GM12878 (cell line): ENCODE measurements at regions of chr4 and their contacts with region 1.

Region 1: DNA sequence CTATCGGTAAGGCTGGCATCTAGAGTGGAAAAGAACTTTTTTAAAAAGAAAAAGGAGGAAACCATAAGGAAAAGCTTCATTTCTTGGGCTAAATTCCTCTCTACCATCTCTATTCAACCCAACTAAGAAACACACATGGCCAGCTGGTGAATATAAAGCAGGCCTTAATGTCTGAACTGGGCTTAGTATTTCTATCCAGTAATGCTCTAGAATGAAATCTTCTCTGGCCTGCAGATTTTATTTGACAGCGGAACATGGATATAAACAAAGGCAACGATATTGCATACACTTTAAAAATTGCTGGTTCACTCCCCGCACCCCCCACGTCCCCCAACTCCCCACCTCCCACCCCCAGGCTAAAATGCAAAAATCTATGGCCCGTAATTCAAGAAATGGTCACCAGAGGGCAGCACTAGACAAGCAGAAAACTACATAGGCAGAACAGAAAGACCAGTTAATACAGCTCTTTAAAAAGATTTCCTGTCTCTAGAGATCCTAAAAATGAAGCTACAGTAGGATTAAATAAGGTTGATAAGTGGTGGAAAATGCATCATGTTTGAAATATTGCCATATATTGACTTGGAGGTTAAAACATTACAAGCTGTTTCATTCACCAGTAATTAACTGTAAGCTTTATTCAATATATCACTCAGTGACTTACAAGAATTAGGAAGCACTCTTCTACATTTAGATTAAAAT is 155.2 kb upstream of the GALNT7 start:
- DNase-seq: peak; percentile 9
- ATAC-seq: peak; percentile 84
- H3K4me3 ChIP-seq: no peak overlapping the region
- H3K27ac ChIP-seq: no peak overlapping the region
- H3K4me1 ChIP-seq: no peaks in the 10 kb centered on the region
- H3K27me3 ChIP-seq: no peaks in the 10 kb centered on the region
- CTCF ChIP-seq: peak; percentile 42 to 65 (median 64); a peak in 5 of 6 replicates
- EP300 ChIP-seq: no peak
- POLR2A ChIP-seq: no peak
- RAD21 ChIP-seq: peak; percentile 94

Region 2: DNA sequence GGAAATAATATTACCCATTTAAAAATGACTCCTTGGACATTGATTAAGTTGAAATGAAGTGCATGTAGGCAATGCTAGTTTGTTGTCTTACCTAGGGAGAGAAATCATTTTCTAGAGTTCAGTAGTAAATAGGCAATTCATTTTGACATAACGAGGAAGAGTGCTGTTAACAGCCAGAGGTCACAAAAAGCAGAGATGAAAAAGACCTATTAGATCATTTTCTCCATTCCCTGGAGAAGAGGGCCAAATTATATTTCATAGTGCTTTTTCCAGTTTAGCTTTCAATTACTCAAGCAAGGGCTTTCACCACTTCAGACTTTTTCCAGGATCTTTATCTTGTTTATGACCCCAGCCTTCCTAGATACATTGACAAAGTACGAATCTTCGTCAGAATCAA is 219.1 kb before region 1 on chr4:
- CTCF ChIA-PET with region 1: no interaction called
- POLR2A ChIA-PET with region 1: no interaction called
- RAD21 ChIA-PET with region 1: no interaction called
- SMC1A ChIA-PET with region 1: no interaction called
- in situ Hi-C with region 1: no loop called
- intact Hi-C with region 1: no loop called
- DNase-seq: no peak
- ATAC-seq: no peak
- H3K4me3 ChIP-seq: no peak overlapping the region
- H3K27ac ChIP-seq: no peak overlapping the region
- H3K4me1 ChIP-seq: no peaks in the 10 kb centered on the region
- H3K27me3 ChIP-seq: no peaks in the 10 kb centered on the region
- CTCF ChIP-seq: no peak
- EP300 ChIP-seq: no peak
- POLR2A ChIP-seq: no peak
- RAD21 ChIP-seq: no peak

Region 3: GRCh38 chr4:172953896-172954568 is 59.3 kb before region 1 on chr4:
- CTCF ChIA-PET with region 1: no interaction called
- POLR2A ChIA-PET with region 1: no interaction called
- RAD21 ChIA-PET with region 1: no interaction called
- SMC1A ChIA-PET with region 1: no interaction called
- in situ Hi-C with region 1: no loop called
- intact Hi-C with region 1: no loop called
- DNase-seq: no peak
- ATAC-seq: no peak
- H3K4me3 ChIP-seq: no peak overlapping the region
- H3K27ac ChIP-seq: no peak overlapping the region
- H3K4me1 ChIP-seq: no peaks in the 10 kb centered on the region
- H3K27me3 ChIP-seq: no peaks in the 10 kb centered on the region
- CTCF ChIP-seq: no peak
- EP300 ChIP-seq: no peak
- POLR2A ChIP-seq: no peak
- RAD21 ChIP-seq: no peak

Region 4: DNA sequence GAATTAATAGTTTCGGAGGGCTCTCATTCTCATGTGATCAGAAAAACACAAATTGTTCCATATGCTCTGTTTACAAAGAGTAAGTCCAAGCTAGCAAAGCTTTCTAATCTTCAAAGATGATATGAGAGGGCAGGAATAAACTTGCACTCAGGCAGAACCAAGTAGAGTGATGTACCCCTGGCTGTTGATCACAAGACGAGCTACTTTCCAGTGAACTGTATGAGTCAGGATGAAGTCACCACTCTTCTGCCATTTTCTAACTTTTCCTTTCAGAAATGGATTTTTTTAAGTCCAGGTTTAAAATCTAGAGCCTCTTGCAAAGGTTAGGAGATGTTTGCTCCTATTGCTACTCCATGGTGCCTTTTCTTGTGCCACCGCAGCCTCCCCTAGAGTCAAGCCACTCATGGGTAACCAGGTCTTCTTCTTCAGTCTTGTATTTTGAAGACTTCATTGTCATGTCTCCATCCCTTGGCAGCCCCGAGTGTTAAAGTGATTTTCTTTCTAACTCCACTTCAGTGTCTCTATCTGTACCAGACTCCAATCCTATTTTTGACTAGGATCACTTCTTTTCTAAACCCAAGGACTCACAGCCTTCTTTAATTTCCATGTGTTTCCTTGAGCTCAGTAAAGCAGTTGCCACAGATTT is 16.7 kb before region 1 on chr4:
- CTCF ChIA-PET with region 1: interaction called, 10 read pairs
- POLR2A ChIA-PET with region 1: no interaction called
- RAD21 ChIA-PET with region 1: no interaction called
- SMC1A ChIA-PET with region 1: interaction called, 8 read pairs
- in situ Hi-C with region 1: no loop called
- intact Hi-C with region 1: no loop called
- DNase-seq: no peak
- ATAC-seq: peak; percentile 52
- H3K4me3 ChIP-seq: no peak overlapping the region
- H3K27ac ChIP-seq: no peak overlapping the region
- H3K4me1 ChIP-seq: no peaks in the 10 kb centered on the region
- H3K27me3 ChIP-seq: no peaks in the 10 kb centered on the region; a peak in 1 of 4 replicates
- CTCF ChIP-seq: no peak
- EP300 ChIP-seq: no peak
- POLR2A ChIP-seq: no peak
- RAD21 ChIP-seq: no peak

Region 5: DNA sequence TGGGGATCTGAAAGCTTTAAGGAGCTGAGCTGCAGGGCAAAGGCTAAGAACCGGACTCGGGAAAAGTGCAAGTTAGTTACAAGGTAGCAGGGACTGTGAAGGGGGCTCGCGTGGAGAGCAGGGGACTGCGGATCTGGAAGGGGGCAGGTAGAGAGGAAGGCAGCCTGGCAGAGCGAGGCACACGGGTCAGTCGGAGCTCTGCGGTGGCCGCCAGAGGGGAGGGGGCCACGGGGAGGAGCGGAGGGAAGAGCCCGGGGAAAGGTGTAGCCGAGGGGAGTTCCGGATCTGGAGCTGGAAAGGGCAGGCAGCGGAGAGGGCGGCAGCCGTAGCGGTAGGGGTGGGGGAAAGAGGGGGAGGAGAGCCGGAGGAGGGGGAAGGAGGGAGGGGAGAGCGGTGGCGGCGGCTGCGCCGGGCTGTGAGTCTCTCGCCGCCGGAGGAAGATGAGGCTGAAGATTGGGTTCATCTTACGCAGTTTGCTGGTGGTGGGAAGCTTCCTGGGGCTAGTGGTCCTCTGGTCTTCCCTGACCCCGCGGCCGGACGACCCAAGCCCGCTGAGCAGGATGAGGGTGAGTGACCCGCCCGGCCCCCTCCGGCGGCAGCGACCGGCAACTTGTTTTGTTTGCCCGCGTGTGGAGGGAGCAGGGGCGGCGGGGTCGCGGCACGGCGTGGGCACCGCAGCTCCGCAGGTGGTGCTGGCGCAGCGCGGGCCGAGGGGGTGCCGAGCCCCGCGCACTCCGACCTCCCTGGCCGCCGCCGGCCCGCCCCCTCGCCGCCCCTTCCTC is 155.2 kb after region 1 on chr4 and contains the start of gene GALNT7:
- CTCF ChIA-PET with region 1: interaction called, 11 read pairs
- POLR2A ChIA-PET with region 1: no interaction called
- RAD21 ChIA-PET with region 1: interaction called, 12 read pairs
- SMC1A ChIA-PET with region 1: interaction called, 10 read pairs
- in situ Hi-C with region 1: no loop called
- intact Hi-C with region 1: no loop called
- DNase-seq: no peak
- ATAC-seq: peak; percentile 62
- H3K4me3 ChIP-seq: peak within 1 kb of the TSS; percentile 99
- H3K27ac ChIP-seq: peak within 1 kb of the TSS; percentile 94
- H3K4me1 ChIP-seq: peaks cover 18% of the 10 kb centered on the region
- H3K27me3 ChIP-seq: no peaks in the 10 kb centered on the region
- CTCF ChIP-seq: no peak
- EP300 ChIP-seq: no peak
- POLR2A ChIP-seq: peak; percentile 66
- RAD21 ChIP-seq: no peak
- polyA plus RNA-seq, gene GALNT7: 14.2 to 14.8 TPM

Region 6: DNA sequence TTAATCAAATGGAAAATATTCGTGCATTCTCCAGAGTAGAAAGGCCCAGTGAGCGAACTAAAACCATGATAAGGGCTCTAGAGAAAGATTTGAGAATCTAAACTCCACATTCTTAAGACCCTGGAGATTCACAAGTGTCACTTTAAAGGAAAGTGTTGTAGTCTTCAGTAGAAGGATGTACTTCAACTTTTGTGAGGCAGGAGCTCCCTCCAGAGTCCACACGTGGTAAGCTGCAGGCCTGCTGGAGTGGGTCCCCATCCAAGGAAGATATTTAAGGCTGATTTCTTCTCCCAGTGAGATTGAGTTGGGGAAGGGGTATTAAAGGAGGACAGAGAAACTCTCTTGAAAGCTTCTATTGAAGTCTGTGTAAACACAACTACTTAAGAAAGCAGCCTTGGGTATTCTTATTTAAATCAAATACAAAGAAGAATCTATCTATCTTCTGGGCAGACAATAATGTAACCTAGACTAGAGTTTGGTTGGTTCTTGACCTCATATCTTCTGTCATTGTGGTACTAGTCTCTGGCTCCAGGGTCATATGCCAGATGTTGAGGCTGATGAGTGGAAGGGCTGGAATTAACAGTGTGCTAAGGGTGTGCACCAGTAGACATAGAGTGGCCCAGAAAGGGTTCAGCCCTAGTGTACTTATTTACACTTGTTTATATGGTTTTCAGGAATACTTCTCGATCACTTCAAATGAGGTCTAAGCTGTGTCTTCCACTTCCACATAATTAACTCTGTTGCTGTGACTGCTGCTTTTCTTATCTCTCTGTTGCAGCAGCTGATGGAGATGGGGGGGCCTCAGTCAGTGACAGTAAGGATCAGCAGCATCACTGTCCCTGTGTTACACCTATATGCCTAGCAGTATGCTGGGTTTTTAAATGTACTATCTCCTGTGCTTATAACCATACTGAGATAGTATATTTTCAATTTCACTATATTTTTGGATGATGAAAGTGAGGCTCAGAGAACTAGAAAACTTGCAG is 244.6 kb after region 1 on chr4:
- CTCF ChIA-PET with region 1: interaction called, 175 read pairs
- POLR2A ChIA-PET with region 1: interaction called, 3 read pairs
- RAD21 ChIA-PET with region 1: interaction called, 98 read pairs
- SMC1A ChIA-PET with region 1: interaction called, 96 read pairs
- in situ Hi-C with region 1: loop called (anchors 5 kb)
- intact Hi-C with region 1: loop called (anchors 1 kb)
- DNase-seq: no peak
- ATAC-seq: peak; percentile 92
- H3K4me3 ChIP-seq: no peak overlapping the region
- H3K27ac ChIP-seq: no peak overlapping the region
- H3K4me1 ChIP-seq: peaks cover 15% of the 10 kb centered on the region
- H3K27me3 ChIP-seq: no peaks in the 10 kb centered on the region
- CTCF ChIP-seq: peak; percentile 83 to 95 (median 91)
- EP300 ChIP-seq: no peak
- POLR2A ChIP-seq: no peak
- RAD21 ChIP-seq: peak; percentile 96

Region 7: DNA sequence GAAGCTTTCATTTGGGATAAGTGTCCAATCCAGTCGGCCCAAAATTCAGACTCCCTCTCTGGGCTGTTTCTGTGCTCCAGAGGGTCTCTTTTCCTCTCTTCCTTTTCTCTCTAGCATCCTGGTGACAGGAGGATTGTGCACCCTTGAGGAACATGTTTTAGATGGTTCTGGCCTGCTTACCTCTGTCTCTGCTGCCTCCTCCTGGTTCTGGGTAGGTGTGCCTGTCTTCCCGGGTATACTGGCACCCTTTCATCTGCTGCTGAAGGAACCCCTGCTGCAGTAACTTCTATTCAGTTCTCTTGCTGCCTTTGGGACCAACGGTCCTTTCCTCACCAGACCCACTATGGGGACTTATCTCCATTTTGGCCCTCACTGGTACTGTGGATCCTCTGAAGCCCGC is 267.6 kb after region 1 on chr4:
- CTCF ChIA-PET with region 1: interaction called, 15 read pairs
- POLR2A ChIA-PET with region 1: no interaction called
- RAD21 ChIA-PET with region 1: interaction called, 4 read pairs
- SMC1A ChIA-PET with region 1: interaction called, 9 read pairs
- in situ Hi-C with region 1: no loop called
- intact Hi-C with region 1: no loop called
- DNase-seq: no peak
- ATAC-seq: peak; percentile 47; the same call in 2 of the 3 replicates
- H3K4me3 ChIP-seq: no peak overlapping the region
- H3K27ac ChIP-seq: no peak overlapping the region
- H3K4me1 ChIP-seq: no peaks in the 10 kb centered on the region
- H3K27me3 ChIP-seq: no peaks in the 10 kb centered on the region
- CTCF ChIP-seq: peak; percentile 15 to 17 (median 16); a peak in 2 of 6 replicates
- EP300 ChIP-seq: no peak
- POLR2A ChIP-seq: no peak
- RAD21 ChIP-seq: peak; percentile 36

Region 8: DNA sequence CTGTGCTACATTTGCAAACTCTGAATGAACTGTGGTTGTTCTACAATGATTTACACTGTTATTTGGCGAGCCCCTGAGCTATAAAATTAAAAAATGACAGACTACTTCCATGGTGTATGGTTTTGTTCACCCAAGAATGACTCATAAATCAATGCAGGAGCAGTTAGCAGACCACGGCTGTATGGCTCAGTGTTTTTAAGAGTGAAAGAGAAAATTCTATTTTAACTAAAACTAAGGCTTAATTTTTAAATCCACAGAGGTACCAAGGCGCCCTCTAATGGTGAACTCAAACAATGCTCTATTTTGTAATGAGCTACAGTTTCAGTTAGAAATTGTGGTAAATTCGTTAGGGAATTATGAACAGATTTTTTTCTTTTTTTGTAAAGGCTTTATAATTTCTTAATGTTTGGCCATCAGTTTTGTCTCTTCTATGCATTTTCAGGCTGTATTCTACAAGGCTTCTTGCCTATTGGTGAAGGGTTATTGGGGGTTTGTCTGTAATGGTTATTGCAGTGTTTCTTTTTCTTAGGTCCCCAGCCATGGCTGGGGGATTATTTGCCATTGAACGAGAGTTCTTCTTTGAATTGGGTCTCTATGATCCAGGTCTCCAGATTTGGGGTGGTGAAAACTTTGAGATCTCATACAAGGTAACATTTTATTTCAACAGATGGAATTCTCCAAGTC is 288.3 kb after region 1 on chr4:
- CTCF ChIA-PET with region 1: interaction called, 150 read pairs
- POLR2A ChIA-PET with region 1: no interaction called
- RAD21 ChIA-PET with region 1: interaction called, 76 read pairs
- SMC1A ChIA-PET with region 1: interaction called, 99 read pairs
- in situ Hi-C with region 1: no loop called
- intact Hi-C with region 1: loop called (anchors 1 kb)
- DNase-seq: no peak
- ATAC-seq: peak; percentile 58
- H3K4me3 ChIP-seq: no peak overlapping the region
- H3K27ac ChIP-seq: no peak overlapping the region
- H3K4me1 ChIP-seq: no peaks in the 10 kb centered on the region
- H3K27me3 ChIP-seq: no peaks in the 10 kb centered on the region
- CTCF ChIP-seq: peak; percentile 58 to 70 (median 60)
- EP300 ChIP-seq: no peak
- POLR2A ChIP-seq: no peak
- RAD21 ChIP-seq: peak; percentile 75

Region 9: DNA sequence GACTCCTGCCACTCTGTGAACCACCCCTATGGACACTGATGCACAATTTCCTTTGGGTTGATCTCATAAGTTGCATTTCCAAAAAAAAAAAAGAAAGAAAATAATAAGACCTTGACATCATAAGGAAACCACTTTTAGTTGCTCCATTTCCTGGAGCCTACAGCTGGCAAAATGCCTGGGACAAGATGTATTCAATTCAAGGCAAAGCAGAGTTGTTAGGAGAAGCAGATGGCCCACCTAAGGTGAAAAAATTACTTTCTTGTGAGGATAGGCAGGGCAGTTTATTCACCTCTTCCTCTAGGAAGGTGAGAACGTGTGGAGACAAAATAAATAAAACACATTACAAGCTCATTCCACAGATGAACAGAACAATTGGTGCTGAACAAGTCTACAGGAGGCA is 399.7 kb after region 1 on chr4:
- CTCF ChIA-PET with region 1: interaction called, 16 read pairs
- POLR2A ChIA-PET with region 1: no interaction called
- RAD21 ChIA-PET with region 1: interaction called, 6 read pairs
- SMC1A ChIA-PET with region 1: interaction called, 6 read pairs
- in situ Hi-C with region 1: loop called (anchors 5 kb)
- intact Hi-C with region 1: loop called (anchors 1 kb)
- DNase-seq: no peak
- ATAC-seq: no peak
- H3K4me3 ChIP-seq: no peak overlapping the region
- H3K27ac ChIP-seq: no peak overlapping the region
- H3K4me1 ChIP-seq: no peaks in the 10 kb centered on the region
- H3K27me3 ChIP-seq: no peaks in the 10 kb centered on the region
- CTCF ChIP-seq: no peak
- EP300 ChIP-seq: no peak
- POLR2A ChIP-seq: no peak
- RAD21 ChIP-seq: no peak